Heart left ventricle (tissue), 16 donors: ENCODE measurements at regions of chr1 and their contacts with region 1.

Region 1: DNA sequence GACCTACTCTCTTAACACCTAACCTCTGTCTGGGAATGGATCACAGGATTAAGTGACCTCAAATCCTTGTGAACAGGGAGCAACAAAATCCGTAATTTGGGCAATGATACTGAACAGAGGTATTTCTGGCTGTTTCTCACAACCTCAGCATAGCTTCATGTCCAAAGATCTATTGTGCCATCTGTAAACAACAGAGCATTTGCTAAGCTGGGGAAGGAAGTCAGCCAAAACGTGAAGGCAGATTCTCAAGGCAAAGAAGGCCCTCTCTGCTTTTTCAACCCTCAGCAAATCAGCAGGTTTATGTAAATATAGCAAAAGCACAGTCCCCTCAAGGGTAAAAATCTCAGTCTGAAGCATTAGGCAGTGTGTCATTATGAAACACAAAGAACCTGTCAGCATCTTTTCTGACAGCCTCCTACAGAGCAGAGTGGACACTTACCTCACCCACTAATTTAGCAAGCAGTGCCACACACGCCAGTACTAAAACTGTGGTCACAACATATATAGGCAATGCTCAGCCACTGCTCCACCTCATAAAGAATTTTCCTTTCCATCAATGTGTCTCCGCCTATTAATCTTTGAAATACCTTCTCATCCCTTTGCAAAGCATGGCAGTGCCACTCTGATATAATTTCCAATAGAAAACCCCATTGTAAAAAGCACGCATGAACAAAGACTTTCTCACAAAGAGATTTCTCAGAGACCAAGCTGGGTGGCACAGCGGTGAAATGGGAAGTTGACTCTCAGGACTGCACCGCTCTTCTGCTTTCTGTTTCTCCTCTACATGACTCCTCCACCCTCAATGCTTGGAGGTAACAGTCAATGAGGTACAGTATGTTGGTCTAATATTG is 188.0 kb downstream of the RERE start:
- DNase-seq: no peak
- ATAC-seq: peak; percentile 60 to 86 (median 78)
- H3K4me3 ChIP-seq: no peak overlapping the region
- H3K27ac ChIP-seq: peak overlapping the region in 9 of 12 donors; percentile 42 to 68 (median 56)
- H3K4me1 ChIP-seq: peaks cover 0 to 69% (median 52%) of the 10 kb centered on the region in 12 donors
- H3K27me3 ChIP-seq: no peaks in the 10 kb centered on the region
- CTCF ChIP-seq: no peak
- POLR2A ChIP-seq: no peak

Region 2: GRCh38 chr1:8671306-8671917 is 41.9 kb after region 1 on chr1:
- intact Hi-C with region 1: loop called in 1 of 10 experiments (anchors 5 kb)
- DNase-seq: peak in 3 of 5 donors; percentile 39 to 48 (median 40)
- ATAC-seq: peak; percentile 60 to 75 (median 74)
- H3K4me3 ChIP-seq: no peak overlapping the region
- H3K27ac ChIP-seq: peak overlapping the region in 2 of 12 donors; percentile 28 to 33
- H3K4me1 ChIP-seq: peaks cover 3 to 58% (median 50%) of the 10 kb centered on the region in 12 donors
- H3K27me3 ChIP-seq: no peaks in the 10 kb centered on the region
- CTCF ChIP-seq: peak; percentile 74 to 92 (median 86)
- POLR2A ChIP-seq: no peak